ENCODE measurements at regions of chr16 and their contacts with region 1.

Region 1: DNA sequence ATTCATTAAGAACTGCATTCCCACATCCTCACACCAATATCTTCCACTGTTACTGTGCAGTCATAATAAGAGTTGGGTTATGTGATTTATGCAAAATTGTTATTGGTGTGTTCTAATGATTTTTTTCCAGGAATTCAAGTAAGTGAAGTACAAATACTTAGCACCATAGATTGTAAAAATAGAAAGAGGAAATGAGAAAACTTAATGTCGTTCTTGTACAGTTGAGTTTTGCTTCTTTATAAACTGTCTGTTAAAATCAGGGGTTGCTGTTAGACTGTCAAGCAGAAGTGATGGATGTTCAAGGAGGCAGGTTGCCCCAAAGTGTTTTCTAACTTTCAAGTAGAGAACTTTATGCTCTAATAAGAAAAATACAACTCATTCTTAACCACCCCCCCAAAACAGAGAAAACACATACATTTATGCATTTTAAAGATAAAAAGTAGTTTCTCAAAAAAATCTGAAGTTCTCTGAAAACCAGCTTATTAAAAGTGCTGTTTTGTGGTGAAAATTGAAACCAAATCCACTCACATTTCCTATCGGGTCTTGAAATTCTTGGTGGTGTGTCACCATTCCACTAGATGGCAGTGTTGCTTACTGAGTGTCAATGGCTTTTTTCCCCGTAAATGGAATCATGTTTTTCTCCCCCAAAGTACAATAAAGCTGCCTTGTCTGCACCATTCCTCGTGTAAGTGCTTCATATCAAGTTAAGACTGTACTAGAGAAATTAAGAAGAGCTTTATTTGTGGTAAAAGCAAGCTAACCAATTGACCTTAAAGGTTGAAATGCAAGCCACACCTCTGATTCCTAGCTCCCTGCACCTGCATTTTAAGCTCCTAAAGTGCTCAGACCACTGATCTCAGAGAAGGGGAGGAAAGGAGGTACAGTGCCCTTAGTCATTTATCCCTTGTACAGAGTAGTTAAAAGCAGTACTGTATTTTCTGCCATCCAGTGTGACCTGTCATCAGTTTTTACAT is 4.7 kb upstream of the IGSF6 start:
- DNase-seq: peak; percentile 60 to 74
- ATAC-seq: peak; percentile 56 to 62; a peak in 5 of 6 replicates
- H3K4me3 ChIP-seq: no peak overlapping the region
- H3K27ac ChIP-seq: no peak overlapping the region
- H3K4me1 ChIP-seq: 0 out of 3 replicates have a peak, but pooled peaks cover 3% of the 10 kb centered on the region
- CTCF ChIP-seq: peak; percentile 95
- EP300 ChIP-seq: no peak
- POLR2A ChIP-seq: no peak
- RAD21 ChIP-seq: peak; percentile 74 to 77

Region 2: GRCh38 chr16:21638573-21638975 is 18.5 kb before region 1 on chr16:
- CTCF ChIA-PET with region 1: interaction called, 57 read pairs
- POLR2A ChIA-PET with region 1: no interaction called
- DNase-seq: no peak
- ATAC-seq: peak in 1 of 2 experiments; percentile 66; a peak in 3 of 6 replicates
- H3K4me3 ChIP-seq: no peak overlapping the region
- H3K27ac ChIP-seq: no peak overlapping the region
- H3K4me1 ChIP-seq: peaks cover 7% of the 10 kb centered on the region; the same call in 2 of the 3 replicates
- CTCF ChIP-seq: no peak
- EP300 ChIP-seq: no peak
- POLR2A ChIP-seq: no peak
- RAD21 ChIP-seq: no peak

Region 3: GRCh38 chr16:21646721-21647561 is 10.1 kb before region 1 on chr16:
- CTCF ChIA-PET with region 1: interaction called, 57 read pairs
- POLR2A ChIA-PET with region 1: no interaction called
- DNase-seq: no peak
- ATAC-seq: no peak
- H3K4me3 ChIP-seq: no peak overlapping the region
- H3K27ac ChIP-seq: no peak overlapping the region
- H3K4me1 ChIP-seq: no peaks in the 10 kb centered on the region
- CTCF ChIP-seq: no peak
- EP300 ChIP-seq: no peak
- POLR2A ChIP-seq: no peak
- RAD21 ChIP-seq: no peak

Region 4: GRCh38 chr16:21684199-21684598 is 27.1 kb after region 1 on chr16:
- CTCF ChIA-PET with region 1: interaction called, 10 read pairs
- POLR2A ChIA-PET with region 1: no interaction called
- DNase-seq: peak in 1 of 2 experiments; percentile 47
- ATAC-seq: no peak
- H3K4me3 ChIP-seq: no peak overlapping the region
- H3K27ac ChIP-seq: no peak overlapping the region
- H3K4me1 ChIP-seq: no peaks in the 10 kb centered on the region
- CTCF ChIP-seq: peak; percentile 40; the same call in 2 of the 3 replicates
- EP300 ChIP-seq: no peak
- POLR2A ChIP-seq: no peak
- RAD21 ChIP-seq: no peak

Region 5: DNA sequence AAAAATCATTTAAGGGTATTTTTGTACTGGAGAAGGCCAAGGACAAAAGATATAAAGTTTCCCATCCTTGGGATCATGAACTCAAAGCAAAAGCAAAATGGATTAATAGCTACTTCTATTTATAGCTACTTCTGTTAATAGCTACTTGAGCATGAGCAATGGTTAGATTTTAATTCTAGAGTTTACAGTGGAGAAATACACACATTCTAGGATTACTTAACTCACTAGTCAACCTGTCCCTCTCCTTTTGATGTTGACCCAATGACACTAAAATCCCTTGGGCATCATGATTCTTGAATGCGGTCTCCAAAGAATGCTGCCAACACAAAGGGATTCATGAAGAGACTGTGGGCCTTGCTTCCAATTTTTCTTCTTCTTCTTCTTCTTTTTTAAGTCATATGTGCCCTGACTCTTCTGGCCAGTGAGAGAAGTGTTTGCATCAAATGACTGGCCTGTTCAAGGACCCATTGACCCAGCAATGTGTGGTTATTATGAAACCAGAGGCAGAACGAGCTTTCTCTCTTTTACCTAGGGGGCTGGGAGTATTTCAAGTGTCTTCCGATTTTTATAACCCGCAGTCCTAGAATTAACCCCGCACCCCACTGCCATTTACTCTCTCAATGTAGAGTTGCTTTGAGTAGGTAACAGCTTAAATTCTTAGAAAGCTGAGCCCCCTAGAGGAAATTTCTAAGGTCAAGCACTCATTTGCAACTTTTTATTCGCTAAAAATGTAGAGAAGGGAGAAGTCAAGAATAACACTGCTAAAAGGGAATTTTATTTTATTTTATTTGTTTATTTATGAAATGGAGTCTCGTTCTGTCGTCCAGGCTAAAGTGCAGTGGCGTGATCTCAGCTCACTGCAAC is 41.3 kb after region 1 on chr16:
- CTCF ChIA-PET with region 1: interaction called, 85 read pairs
- POLR2A ChIA-PET with region 1: no interaction called
- DNase-seq: no peak
- ATAC-seq: no peak
- H3K4me3 ChIP-seq: no peak overlapping the region
- H3K27ac ChIP-seq: no peak overlapping the region
- H3K4me1 ChIP-seq: no peaks in the 10 kb centered on the region
- CTCF ChIP-seq: no peak
- EP300 ChIP-seq: no peak
- POLR2A ChIP-seq: no peak
- RAD21 ChIP-seq: no peak

Region 6: GRCh38 chr16:21708533-21709115 is 51.5 kb after region 1 on chr16:
- CTCF ChIA-PET with region 1: interaction called, 85 read pairs
- POLR2A ChIA-PET with region 1: no interaction called
- DNase-seq: peak; percentile 66 to 73
- ATAC-seq: peak; percentile 62 to 79; a peak in 5 of 6 replicates
- H3K4me3 ChIP-seq: no peak overlapping the region
- H3K27ac ChIP-seq: no peak overlapping the region
- H3K4me1 ChIP-seq: no peaks in the 10 kb centered on the region
- CTCF ChIP-seq: peak; percentile 77
- EP300 ChIP-seq: no peak
- POLR2A ChIP-seq: no peak
- RAD21 ChIP-seq: peak; percentile 74 to 77

Region 7: DNA sequence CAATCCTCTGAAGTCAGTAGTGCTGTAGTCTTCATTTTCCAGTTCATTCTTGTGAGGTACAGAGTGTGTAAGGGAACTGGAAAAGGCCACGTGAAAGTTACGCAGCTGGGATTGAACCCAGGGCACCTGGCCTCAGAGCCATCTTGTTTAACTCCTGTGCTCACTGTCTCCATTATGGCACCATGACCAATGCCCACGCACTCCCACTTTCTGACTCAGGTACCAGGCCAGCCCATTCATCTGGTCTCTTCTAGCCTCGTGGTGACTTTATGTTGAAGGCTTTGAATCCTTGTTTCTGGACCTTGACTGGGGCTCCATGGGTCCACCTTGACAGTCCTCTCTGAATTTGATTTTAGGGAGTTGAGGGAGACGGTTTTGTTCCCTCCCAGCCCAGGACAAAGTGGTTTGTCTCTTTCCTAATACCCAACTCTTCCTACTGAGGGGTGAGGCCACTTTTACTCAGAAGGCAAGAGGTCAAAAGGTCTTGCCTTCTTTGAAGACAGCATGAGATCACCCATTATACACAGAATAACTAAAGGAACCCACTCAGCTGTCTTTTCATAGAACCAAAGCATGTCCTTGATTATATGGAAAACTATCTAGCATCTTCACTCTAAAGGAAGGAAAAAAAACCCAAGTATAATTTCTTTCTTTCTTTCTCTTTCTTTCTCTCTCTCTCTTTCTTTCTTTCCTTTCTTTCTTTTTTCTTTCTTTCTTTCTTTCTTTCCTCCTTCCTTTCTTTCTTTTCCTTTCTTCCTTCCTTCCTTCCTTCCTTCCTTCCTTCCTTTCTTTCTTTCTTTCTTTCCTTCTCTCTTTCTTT is 56.7 kb after region 1 on chr16:
- CTCF ChIA-PET with region 1: interaction called, 85 read pairs
- POLR2A ChIA-PET with region 1: no interaction called
- DNase-seq: no peak
- ATAC-seq: no peak
- H3K4me3 ChIP-seq: no peak overlapping the region
- H3K27ac ChIP-seq: no peak overlapping the region
- H3K4me1 ChIP-seq: no peaks in the 10 kb centered on the region
- CTCF ChIP-seq: no peak
- EP300 ChIP-seq: no peak
- POLR2A ChIP-seq: no peak
- RAD21 ChIP-seq: no peak

Region 8: DNA sequence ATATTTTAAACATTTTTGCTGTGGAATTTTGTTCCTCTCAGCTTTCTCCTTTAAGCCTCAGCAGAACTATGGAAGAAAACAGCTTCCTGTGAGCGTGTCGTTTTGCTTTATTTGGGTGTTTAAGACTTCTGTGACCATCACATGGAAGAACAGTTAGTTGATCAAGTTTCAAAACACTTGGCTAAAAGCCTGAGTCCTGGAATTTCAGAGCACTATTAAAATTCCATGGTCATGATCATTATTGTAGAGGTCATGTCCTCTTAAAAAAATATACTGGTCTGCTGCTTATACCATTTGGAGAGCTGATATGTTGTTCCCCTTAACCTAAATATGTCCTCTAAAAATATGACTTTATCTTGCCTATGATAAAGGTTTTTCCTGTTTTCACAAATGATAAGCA is 729.9 kb after region 1 on chr16:
- CTCF ChIA-PET with region 1: no interaction called
- POLR2A ChIA-PET with region 1: no interaction called
- DNase-seq: no peak
- ATAC-seq: no peak
- H3K4me3 ChIP-seq: no peak overlapping the region
- H3K27ac ChIP-seq: no peak overlapping the region
- H3K4me1 ChIP-seq: peaks cover 13% of the 10 kb centered on the region; the same call in 1 of the 3 replicates
- CTCF ChIP-seq: no peak
- EP300 ChIP-seq: no peak
- POLR2A ChIP-seq: no peak
- RAD21 ChIP-seq: no peak

Measured in A549 (cell line).